CD4-positive, alpha-beta memory T cell (primary cell): ENCODE measurements at regions of chr16 and their contacts with region 1.

Region 1: DNA sequence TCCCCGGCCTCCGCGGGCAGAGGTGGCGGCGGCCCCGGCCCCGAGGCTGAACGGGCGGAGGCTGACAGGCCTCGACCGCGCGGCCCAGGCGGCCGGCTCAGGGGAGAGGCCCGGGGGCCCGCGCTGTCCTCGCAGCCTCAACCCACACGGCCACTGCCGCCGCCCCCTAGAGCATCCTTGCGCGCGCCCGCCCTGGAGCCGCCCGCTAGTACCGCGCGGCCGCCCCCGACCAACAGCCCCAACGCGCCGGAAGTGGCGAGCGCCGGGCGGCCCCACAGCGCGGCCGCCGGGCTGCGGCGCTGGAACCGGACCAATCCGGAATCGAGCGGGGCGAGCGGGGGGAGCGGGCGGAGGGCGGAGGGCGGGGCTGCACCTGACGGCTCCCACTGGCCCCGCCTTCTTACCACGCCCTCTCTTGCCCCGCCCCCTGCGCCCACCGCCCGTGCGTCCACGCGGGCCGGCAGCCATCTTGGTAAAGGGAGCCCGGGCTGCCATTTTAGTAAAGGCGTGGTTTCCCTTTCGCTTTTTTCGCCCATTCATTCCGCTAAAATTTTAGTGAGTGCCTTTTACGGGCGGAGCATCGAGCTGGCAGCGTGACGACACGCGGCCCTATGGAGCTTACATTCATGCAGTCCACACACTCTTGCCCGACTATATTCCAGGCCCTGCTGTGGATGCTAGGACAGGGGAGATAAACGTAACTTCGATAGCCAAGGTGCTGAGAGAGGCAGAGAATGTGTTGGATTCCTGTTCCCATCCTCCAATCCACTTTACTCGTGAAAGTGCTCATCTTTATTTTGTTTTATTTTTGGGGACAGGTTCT is at the start of gene XPO6:
- DNase-seq: peak; percentile 97 to 98 (median 97)
- H3K4me3 ChIP-seq: peak within 1 kb of the TSS; percentile 72 to 92
- H3K4me3 Mint-ChIP-seq: peak within 1 kb of the TSS; percentile 87 to 96 (median 92)
- H3K27ac ChIP-seq: peak within 1 kb of the TSS; percentile 71
- H3K27ac Mint-ChIP-seq: peak within 1 kb of the TSS; percentile 83 to 98 (median 92)
- H3K4me1 ChIP-seq: peaks cover 41% of the 10 kb centered on the region
- H3K4me1 Mint-ChIP-seq: peaks cover 17 to 44% (median 30%) of the 10 kb centered on the region in 4 donors
- H3K27me3 ChIP-seq: no peaks in the 10 kb centered on the region
- H3K27me3 Mint-ChIP-seq: no peaks in the 10 kb centered on the region
- total RNA-seq, gene XPO6: 347 to 350 TPM

Region 2: DNA sequence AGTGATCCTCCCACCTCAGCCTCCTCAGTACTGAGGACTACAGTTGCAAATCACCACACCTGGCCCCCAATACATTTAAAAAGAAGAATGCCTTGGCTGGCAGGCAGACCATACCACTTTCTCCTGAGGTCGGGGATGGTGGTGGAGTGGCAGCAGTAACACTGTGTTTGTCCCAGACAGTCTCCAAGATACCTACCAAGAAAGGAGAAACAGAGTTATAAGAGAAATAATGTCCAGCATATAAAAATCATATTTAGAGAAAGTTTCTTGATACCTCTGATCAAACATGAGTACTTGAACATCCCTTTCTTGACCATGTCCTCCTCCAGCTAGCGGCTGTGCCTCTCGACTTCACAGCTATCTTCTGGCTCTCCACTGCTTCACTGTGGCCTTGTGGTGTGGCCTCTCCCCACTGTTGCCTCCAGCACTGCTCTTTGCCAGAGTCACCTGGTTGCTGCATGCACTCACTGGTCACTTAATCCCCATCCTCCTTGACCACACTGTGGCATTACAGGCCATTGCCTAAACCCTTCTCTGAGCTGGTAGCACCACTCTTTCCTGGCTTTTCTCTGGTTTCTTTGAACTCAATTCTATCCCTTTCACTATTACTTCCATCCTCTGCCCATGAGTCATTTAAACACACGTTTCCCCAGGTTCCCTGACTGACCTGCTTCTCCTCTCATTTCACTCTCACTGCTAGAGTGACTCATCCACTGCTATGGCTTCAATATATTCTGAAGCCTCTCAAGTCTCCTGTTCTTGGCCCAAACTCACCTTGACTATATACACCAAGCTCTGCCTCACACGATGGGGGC is 45.3 kb before region 1 on chr16:
- CTCF ChIA-PET with region 1: interaction called, 5 read pairs
- POLR2A ChIA-PET with region 1: interaction called, 9 read pairs
- intact Hi-C with region 1: loop called (anchors 2 kb)
- DNase-seq: no peak
- H3K4me3 ChIP-seq: no peak overlapping the region
- H3K4me3 Mint-ChIP-seq: peak overlapping the region in 5 of 8 donors; percentile 6 to 75 (median 51)
- H3K27ac ChIP-seq: no peak overlapping the region
- H3K27ac Mint-ChIP-seq: peak overlapping the region; percentile 45 to 93 (median 72)
- H3K4me1 ChIP-seq: peaks cover 86% of the 10 kb centered on the region
- H3K4me1 Mint-ChIP-seq: peaks cover 51 to 85% (median 72%) of the 10 kb centered on the region in 4 donors
- H3K27me3 ChIP-seq: no peaks in the 10 kb centered on the region
- H3K27me3 Mint-ChIP-seq: no peaks in the 10 kb centered on the region

Region 3: DNA sequence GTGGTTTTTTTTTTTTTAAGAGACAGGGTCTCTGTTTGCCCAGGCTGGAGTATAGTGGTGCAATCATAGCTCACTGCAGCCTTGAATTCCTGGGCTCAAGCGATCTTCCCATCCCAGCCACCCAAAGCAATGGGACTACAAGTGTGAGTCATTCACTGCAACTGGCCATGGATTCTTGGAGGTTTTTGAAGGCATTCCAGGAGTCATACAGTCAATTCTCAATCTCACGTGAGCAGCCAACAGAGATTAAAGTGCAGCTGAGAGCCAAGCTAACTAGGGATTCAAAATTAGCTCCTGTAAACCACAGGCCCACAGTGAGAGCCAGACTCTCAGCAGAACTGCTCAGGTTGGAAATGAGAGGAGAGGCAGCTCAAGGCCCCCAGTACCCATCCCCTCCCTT is 30.4 kb before region 1 on chr16:
- CTCF ChIA-PET with region 1: interaction called, 31 read pairs
- POLR2A ChIA-PET with region 1: interaction called, 229 read pairs
- intact Hi-C with region 1: no loop called
- DNase-seq: no peak
- H3K4me3 ChIP-seq: no peak overlapping the region
- H3K4me3 Mint-ChIP-seq: peak overlapping the region in 7 of 8 donors; percentile 55 to 88 (median 72)
- H3K27ac ChIP-seq: peak overlapping the region; percentile 38
- H3K27ac Mint-ChIP-seq: peak overlapping the region; percentile 79 to 96 (median 94)
- H3K4me1 ChIP-seq: peaks cover 82% of the 10 kb centered on the region
- H3K4me1 Mint-ChIP-seq: peaks cover 66 to 94% (median 80%) of the 10 kb centered on the region in 4 donors
- H3K27me3 ChIP-seq: no peaks in the 10 kb centered on the region
- H3K27me3 Mint-ChIP-seq: no peaks in the 10 kb centered on the region

Region 4: DNA sequence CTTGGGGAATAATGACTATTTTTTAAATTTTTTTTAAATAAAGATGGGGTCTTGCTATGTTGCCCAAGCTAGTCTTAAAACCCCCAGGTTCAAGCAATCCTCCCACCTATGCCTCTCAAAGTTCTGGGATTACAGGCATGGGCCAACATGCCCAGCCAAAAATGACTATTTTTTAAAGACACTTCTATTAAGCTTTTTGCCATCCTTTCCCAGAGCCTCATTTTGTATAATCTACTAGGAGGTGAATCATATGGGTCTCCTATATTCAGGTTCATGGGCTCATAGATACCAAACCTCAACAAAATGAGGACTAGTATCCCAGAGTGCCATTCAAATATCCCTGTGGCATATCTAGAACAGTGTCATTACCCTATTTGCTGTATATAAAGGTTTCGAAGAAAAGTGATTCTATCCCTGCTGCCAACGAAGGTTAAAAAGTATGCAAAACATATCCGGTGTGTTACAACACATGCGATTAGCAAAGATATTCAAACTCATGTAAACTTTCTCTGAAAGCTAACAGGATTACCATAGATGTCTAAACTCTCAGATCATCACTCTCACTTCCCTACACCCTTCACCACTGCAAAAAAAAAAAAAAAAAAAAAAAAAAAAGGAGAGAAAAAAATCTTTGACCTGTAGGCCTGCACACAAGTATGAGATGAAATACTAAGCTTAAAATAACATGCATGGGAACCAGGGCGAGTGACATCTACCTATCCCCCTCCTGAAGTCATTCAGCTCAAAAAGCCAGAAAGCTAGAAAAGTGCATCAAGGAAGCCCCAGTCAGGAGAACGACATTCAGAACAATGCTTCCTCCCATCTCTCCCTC is 23.6 kb before region 1 on chr16:
- CTCF ChIA-PET with region 1: interaction called, 116 read pairs
- POLR2A ChIA-PET with region 1: interaction called, 229 read pairs
- intact Hi-C with region 1: loop called (anchors 1 kb)
- DNase-seq: peak in 1 of 5 donors; percentile 32
- H3K4me3 ChIP-seq: no peak overlapping the region
- H3K4me3 Mint-ChIP-seq: peak overlapping the region; percentile 67 to 89 (median 80)
- H3K27ac ChIP-seq: peak overlapping the region; percentile 50
- H3K27ac Mint-ChIP-seq: peak overlapping the region; percentile 91 to 98 (median 93)
- H3K4me1 ChIP-seq: peaks cover 97% of the 10 kb centered on the region
- H3K4me1 Mint-ChIP-seq: peaks cover 75 to 97% (median 87%) of the 10 kb centered on the region in 4 donors
- H3K27me3 ChIP-seq: no peaks in the 10 kb centered on the region
- H3K27me3 Mint-ChIP-seq: no peaks in the 10 kb centered on the region

Region 5: DNA sequence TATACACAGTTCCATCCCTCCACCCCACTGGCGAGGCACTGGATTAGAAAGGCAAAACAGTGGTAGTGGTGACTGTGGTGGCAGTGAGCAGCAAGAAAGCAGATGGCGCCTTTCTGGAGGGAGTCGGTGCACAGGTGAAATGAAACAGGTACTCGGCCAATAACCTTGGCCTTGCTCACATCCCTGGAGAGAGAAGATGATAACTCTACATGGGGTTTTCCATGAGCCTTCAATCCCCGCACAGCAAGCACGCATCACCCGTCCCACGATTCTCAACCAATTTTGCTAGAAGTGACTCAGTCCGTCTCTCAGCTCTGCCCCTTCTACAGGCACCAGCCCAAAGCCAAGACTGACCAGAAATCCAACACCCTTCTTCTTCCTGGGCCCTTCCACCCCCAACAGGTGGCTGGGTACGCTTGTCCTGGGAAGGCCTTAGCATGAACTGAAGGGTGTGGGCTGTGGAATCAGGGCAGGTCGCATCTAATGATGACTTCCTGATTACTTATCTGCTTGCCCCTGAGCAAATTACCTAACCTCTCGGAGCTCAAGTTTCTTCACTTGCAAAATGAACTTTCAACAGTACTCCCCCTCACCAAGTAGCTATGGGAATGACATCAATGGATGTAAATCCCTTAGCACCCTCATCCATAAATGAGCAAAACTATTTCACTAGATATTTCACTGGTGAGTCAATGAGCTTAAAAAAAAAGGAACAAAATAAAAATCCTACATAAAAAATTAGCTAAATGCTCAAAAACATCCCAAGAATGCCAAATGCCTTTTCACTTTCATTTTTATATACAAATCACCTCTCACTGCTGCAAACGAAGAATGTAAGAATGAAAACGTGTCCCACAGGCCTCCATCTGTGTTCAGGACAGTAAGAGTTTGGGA is 18.1 kb before region 1 on chr16:
- CTCF ChIA-PET with region 1: interaction called, 116 read pairs
- POLR2A ChIA-PET with region 1: interaction called, 229 read pairs
- intact Hi-C with region 1: loop called (anchors 1 kb)
- DNase-seq: peak in 2 of 5 donors; percentile 42 to 80
- H3K4me3 ChIP-seq: peak overlapping the region; percentile 18 to 53
- H3K4me3 Mint-ChIP-seq: peak overlapping the region; percentile 76 to 91 (median 84)
- H3K27ac ChIP-seq: peak overlapping the region; percentile 88
- H3K27ac Mint-ChIP-seq: peak overlapping the region; percentile 94 to 99 (median 98)
- H3K4me1 ChIP-seq: peaks cover 87% of the 10 kb centered on the region
- H3K4me1 Mint-ChIP-seq: peaks cover 62 to 85% (median 75%) of the 10 kb centered on the region in 4 donors
- H3K27me3 ChIP-seq: no peaks in the 10 kb centered on the region
- H3K27me3 Mint-ChIP-seq: no peaks in the 10 kb centered on the region

Region 6: GRCh38 chr16:28317040-28317880 is 105.3 kb after region 1 on chr16:
- CTCF ChIA-PET with region 1: no interaction called
- POLR2A ChIA-PET with region 1: interaction called, 4 read pairs
- intact Hi-C with region 1: loop called (anchors 10 kb)
- DNase-seq: peak; percentile 58 to 72 (median 64)
- H3K4me3 ChIP-seq: no peak overlapping the region
- H3K4me3 Mint-ChIP-seq: peak overlapping the region in 5 of 8 donors; percentile 4 to 54 (median 48)
- H3K27ac ChIP-seq: no peak overlapping the region
- H3K27ac Mint-ChIP-seq: peak overlapping the region in 6 of 7 donors; percentile 41 to 88 (median 68)
- H3K4me1 ChIP-seq: peaks cover 30% of the 10 kb centered on the region
- H3K4me1 Mint-ChIP-seq: peaks cover 15 to 39% (median 18%) of the 10 kb centered on the region in 4 donors
- H3K27me3 ChIP-seq: no peaks in the 10 kb centered on the region
- H3K27me3 Mint-ChIP-seq: no peaks in the 10 kb centered on the region